Left cardiac atrium (tissue), 4 donors: ENCODE measurements at regions of chr6 and their contacts with region 1.

Region 1: GRCh38 chr6:85642774-85643536 is at the start of gene SYNCRIP:
- DNase-seq: peak; percentile 99
- ATAC-seq: peak; percentile 90 to 92
- total RNA-seq, gene SYNCRIP: 48.7 to 84.9 TPM

Region 2: DNA sequence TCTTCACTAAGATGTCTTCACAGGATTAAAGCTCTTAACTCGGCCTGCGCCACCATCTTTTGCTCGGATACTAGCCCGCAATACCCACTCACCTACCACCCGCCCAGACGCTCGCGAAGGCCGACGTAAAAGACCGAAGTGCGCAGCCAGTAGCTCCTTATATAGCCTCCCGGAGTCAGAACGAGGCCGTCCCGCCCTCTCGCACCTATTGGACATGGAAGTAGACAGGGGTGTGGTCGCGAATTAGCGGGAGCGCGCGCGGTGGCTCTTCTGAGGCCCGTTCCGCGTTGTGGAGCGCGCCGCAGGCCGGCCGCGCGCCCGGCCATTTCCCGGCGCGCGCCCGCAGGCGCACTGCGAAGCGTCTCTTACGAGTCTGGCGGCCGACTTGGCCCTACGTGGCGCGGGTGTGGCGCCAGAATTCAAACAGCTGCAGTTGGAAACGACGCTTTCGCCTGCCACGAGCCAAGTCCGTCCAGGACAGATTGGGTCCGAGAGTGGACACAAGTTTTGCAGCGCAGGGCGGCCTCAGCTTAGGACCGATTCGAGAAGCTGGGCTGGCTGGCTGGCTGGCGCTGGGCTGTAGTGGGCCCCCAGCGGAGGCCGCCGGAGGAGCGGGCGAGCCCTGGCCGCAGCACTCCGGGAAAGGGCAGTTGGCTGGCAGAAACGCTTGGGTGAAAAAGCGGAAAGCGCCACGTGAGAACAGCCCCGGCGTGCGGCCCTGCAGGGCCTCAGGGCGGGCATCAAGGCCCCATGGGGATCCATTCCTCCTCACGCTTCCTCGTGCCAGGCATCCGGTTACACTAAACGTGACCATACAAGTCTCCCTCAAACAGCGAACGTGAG is 35.9 kb after region 1 on chr6:
- intact Hi-C with region 1: loop called (anchors 1 to 5 kb)
- DNase-seq: peak; percentile 98
- ATAC-seq: peak; percentile 98

Region 3: GRCh38 chr6:85703406-85703805 is 60.5 kb after region 1 on chr6:
- intact Hi-C with region 1: no loop called
- DNase-seq: no peak
- ATAC-seq: no peak

Region 4: GRCh38 chr6:86017236-86017635 is 374.3 kb after region 1 on chr6:
- intact Hi-C with region 1: no loop called
- DNase-seq: no peak
- ATAC-seq: no peak